Activated CD8-positive, alpha-beta T cell treated with anti-CD3 and anti-CD28 coated beads for 36 hours (primary cell): ENCODE measurements at regions of chr1 and their contacts with region 1.

Region 1: DNA sequence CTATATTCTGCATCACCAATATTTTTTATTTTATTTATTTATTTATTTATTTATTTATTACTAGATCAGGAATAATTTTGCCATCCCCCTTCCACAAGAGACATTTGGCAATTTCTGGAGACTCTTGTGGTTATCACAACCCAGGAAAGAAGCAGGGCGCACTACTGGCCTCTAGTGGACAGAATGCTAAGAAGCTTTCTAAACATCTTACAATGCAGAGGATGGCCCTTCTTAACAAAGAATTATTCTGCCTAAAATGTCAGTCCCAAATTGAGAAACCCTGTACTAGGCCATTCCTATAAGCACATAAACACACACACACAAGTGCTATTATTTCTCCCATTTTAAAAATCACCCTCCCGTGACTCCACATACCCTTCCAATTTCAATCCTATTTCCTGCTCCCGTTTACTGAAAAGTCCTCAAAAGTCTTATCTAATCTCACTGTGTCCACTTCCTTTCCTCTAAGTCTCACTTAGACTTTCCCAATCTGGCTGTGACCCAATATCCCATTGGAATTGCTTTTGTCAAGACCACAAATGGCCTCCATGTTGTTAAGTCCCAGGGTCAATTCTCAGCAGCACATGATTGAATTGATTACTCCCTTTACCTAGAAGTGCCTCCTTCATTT is 43.7 kb upstream of the RNF11 start:
- DNase-seq: peak; percentile 78
- ATAC-seq: peak; percentile 45
- H3K4me3 Mint-ChIP-seq: no peak overlapping the region
- H3K27ac Mint-ChIP-seq: no peak overlapping the region
- H3K4me1 Mint-ChIP-seq: no peaks in the 10 kb centered on the region
- H3K27me3 Mint-ChIP-seq: peaks cover 4% of the 10 kb centered on the region
- CTCF ChIP-seq: peak; percentile 91

Region 2: DNA sequence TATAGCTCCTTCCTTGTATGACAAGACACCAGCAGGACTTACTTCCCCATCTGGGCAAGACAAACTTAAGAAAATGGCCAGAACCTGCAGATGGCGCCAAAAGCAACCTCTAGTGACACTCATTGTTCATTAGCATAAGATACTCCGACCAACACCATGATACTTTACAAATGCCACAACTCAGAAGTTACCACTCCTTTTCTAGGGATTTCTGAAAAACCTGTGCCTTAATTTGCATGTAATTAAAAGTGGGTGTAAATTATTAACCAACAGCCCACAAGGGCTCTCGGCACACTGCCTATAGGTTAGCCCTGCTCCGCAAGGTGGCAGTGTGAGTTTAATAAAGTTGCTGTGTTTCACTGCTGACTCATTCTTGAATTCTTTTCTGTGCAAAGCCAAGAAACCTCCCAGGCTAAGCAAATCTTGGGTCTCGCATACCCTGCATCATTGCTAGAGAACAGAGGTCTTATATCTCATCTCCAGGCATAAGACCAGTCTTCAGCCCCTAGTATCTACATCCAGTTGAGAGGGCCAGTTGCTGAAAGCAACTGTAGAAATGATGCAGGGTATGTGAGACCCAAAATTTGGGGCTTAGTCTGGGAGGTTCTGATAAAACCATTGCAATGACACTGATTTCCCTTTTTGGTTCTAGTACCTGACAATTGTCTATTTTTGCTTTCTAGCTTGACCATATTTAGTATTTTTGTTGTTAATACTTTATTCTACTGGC is 318.7 kb before region 1 on chr1:
- CTCF ChIA-PET with region 1: interaction called, 59 read pairs
- POLR2A ChIA-PET with region 1: no interaction called
- intact Hi-C with region 1: loop called (anchors 5 kb)
- DNase-seq: peak; percentile 87
- ATAC-seq: peak; percentile 82
- H3K4me3 Mint-ChIP-seq: no peak overlapping the region
- H3K27ac Mint-ChIP-seq: no peak overlapping the region
- H3K4me1 Mint-ChIP-seq: peaks cover 12% of the 10 kb centered on the region
- H3K27me3 Mint-ChIP-seq: no peaks in the 10 kb centered on the region
- CTCF ChIP-seq: peak; percentile 77

Region 3: DNA sequence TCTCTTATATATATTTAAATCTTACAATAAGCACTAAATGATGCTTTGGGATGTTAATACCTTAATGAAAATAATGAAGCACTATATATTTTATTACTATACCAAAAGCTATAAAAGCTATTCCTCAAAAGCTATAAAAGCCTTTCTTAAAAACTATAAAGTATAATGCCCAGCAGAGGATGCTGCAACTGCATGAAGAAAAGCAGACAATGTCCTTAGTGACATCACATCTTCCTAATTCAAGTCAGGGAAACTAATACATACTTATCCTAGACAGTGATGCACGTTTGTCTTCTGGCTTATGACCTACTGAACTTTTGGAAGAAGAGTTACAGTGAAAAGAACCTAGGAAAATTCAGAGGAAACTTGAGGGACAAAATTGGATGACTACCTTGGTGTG is 103.8 kb before region 1 on chr1:
- CTCF ChIA-PET with region 1: interaction called, 15 read pairs
- POLR2A ChIA-PET with region 1: no interaction called
- intact Hi-C with region 1: no loop called
- DNase-seq: no peak
- ATAC-seq: no peak
- H3K4me3 Mint-ChIP-seq: no peak overlapping the region
- H3K27ac Mint-ChIP-seq: no peak overlapping the region
- H3K4me1 Mint-ChIP-seq: no peaks in the 10 kb centered on the region
- H3K27me3 Mint-ChIP-seq: peaks cover 39% of the 10 kb centered on the region
- CTCF ChIP-seq: no peak

Region 4: GRCh38 chr1:51203121-51203873 is 11.0 kb after region 1 on chr1:
- CTCF ChIA-PET with region 1: interaction called, 18 read pairs
- POLR2A ChIA-PET with region 1: interaction called, 3 read pairs
- intact Hi-C with region 1: no loop called
- DNase-seq: no peak
- ATAC-seq: peak; percentile 77
- H3K4me3 Mint-ChIP-seq: no peak overlapping the region
- H3K27ac Mint-ChIP-seq: no peak overlapping the region
- H3K4me1 Mint-ChIP-seq: peaks cover 5% of the 10 kb centered on the region
- H3K27me3 Mint-ChIP-seq: no peaks in the 10 kb centered on the region
- CTCF ChIP-seq: no peak

Region 5: DNA sequence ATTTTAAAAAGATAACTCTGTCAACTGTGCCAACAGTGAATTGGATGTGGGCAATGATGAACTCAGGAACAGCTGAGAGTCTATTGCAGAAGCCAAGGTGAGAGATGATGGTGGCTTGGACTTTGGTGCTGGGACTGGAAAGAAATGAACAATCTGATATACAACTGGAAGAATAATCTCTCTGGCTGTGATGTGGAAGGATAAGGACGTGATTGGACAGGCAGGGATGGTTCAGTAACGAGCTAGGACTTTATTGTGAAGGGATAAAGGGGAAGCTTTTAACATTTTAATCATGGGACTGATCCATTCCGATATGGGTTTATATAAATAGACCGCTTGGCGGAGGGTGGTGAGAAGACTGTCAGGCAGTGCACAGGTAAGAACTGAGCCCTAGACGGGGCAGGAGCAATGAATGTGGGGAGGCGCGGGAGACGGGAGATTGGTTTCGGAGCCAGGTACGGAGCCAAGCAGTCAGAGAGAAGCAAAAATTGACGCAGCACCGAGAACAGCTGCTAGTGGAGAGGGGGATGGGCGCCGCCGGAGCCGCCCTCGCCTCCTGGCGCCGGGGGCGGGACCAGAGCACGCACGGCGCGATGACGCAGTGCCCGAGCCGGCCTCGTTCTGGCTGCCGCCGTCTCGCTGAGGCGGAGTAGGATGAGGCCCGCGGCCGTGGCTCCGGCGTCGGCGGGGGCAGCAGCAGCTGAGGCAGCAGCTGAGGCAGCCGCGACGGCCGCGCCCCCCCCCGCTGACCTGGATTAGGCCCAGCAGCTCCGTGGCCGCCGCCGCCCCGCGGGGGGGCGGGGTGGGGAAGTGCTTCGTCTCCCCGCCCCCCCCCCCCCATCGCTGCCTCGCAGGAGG is 43.6 kb after region 1 on chr1 and contains the start of gene RNF11:
- CTCF ChIA-PET with region 1: interaction called, 11 read pairs
- POLR2A ChIA-PET with region 1: no interaction called
- intact Hi-C with region 1: no loop called
- DNase-seq: peak; percentile 94
- ATAC-seq: peak; percentile 95
- H3K4me3 Mint-ChIP-seq: peak within 1 kb of the TSS; percentile 80
- H3K27ac Mint-ChIP-seq: peak within 1 kb of the TSS; percentile 90
- H3K4me1 Mint-ChIP-seq: peaks cover 36% of the 10 kb centered on the region
- H3K27me3 Mint-ChIP-seq: no peaks in the 10 kb centered on the region
- CTCF ChIP-seq: no peak
- total RNA-seq, gene RNF11: 21.5 to 22.6 TPM

Region 6: GRCh38 chr1:51381964-51382363 is 189.6 kb after region 1 on chr1:
- CTCF ChIA-PET with region 1: no interaction called
- POLR2A ChIA-PET with region 1: no interaction called
- intact Hi-C with region 1: no loop called
- DNase-seq: no peak
- ATAC-seq: no peak
- H3K4me3 Mint-ChIP-seq: no peak overlapping the region
- H3K27ac Mint-ChIP-seq: no peak overlapping the region
- H3K4me1 Mint-ChIP-seq: peaks cover 4% of the 10 kb centered on the region
- H3K27me3 Mint-ChIP-seq: no peaks in the 10 kb centered on the region
- CTCF ChIP-seq: no peak

Region 7: DNA sequence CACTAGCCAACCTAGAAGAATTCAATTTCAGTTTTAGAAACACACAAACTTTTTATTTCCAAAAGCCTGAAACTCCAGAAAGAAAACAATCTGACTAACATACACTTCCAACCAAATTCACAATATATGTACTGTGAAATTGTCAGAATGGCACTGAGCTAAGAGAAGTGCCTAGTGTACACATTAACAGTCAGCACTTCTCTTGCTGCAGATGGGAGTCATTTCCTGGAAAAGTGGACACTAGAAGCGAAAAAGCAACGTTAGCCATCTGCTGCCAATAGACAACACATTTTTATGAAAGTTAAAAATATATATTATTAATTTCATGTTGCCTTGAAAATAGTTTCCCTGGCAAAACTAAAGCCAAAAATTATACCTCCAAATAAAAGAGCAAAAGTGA is 260.7 kb after region 1 on chr1:
- CTCF ChIA-PET with region 1: no interaction called
- POLR2A ChIA-PET with region 1: no interaction called
- intact Hi-C with region 1: no loop called
- DNase-seq: no peak
- ATAC-seq: no peak
- H3K4me3 Mint-ChIP-seq: no peak overlapping the region
- H3K27ac Mint-ChIP-seq: no peak overlapping the region
- H3K4me1 Mint-ChIP-seq: no peaks in the 10 kb centered on the region
- H3K27me3 Mint-ChIP-seq: no peaks in the 10 kb centered on the region
- CTCF ChIP-seq: no peak